ENCODE measurements at regions of chr4 and their contacts with region 1.

Region 1: GRCh38 chr4:73258686-73259570 is at the start of gene ANKRD17:
- DNase-seq: peak; percentile 97 to 98 (median 98)
- H3K4me3 ChIP-seq: peak within 1 kb of the TSS; percentile 92 to 100 (median 95)
- H3K27ac ChIP-seq: peak within 1 kb of the TSS; percentile 91 to 96
- H3K4me1 ChIP-seq: peaks cover 13 to 31% (median 23%) of the 10 kb centered on the region in 4 experiments
- H3K27me3 ChIP-seq: no peaks in the 10 kb centered on the region

Region 2: DNA sequence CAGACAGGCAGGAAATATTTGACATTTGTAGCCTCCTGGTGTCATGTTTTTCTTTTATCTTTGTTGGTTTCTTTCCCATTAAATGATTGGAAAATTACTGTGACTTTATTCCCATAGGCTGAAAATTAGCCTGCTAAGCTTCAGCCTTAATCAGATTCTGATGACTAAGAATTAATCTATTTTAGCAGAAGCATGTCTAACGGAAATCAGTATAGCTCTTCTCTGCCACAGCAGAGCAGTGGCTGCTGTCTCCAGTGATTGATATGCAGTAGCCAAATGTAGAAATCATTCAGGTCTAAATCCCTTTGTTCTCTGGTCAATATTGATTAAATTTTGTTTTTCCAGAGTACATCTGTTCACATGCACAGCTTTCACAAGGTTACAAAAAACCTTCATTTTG is 1674.3 kb before region 1 on chr4:
- CTCF ChIA-PET with region 1: no interaction called
- POLR2A ChIA-PET with region 1: no interaction called
- DNase-seq: no peak
- H3K4me3 ChIP-seq: no peak overlapping the region
- H3K27ac ChIP-seq: no peak overlapping the region
- H3K4me1 ChIP-seq: peaks cover 0 to 3% (median 0%) of the 10 kb centered on the region in 4 experiments
- H3K27me3 ChIP-seq: no peaks in the 10 kb centered on the region

Region 3: GRCh38 chr4:72767618-72768302 is 491.2 kb before region 1 on chr4:
- CTCF ChIA-PET with region 1: no interaction called
- POLR2A ChIA-PET with region 1: no interaction called
- DNase-seq: no peak
- H3K4me3 ChIP-seq: no peak overlapping the region
- H3K27ac ChIP-seq: no peak overlapping the region
- H3K4me1 ChIP-seq: no peaks in the 10 kb centered on the region
- H3K27me3 ChIP-seq: no peaks in the 10 kb centered on the region

Region 4: DNA sequence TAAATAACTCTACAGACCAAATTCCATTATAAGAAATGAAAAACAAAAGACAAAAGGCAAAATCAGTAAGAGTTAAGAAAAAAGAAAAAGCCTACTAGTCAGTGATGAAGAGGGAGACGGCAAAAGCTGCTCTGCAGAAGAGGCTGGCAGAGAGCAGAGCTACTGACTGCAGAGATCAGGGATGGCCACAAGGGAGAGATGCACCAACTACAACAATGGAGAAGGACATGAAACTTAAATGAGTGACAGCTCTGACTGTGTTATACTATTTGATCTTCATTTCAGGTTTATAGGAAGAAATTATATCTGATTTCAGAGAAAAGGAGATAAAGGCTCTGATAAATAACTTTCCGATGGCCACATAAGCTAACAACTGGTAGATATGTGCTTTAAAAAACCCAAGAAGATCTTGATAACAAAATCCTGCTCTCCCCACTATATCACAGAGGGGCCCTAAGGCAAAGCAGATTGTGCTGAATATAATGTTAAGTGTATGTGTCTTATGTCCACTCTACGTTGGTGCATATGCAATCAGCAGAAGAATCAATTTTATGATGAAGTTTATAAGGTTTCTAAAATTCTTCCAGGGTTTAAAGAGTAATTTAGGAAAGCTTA is 131.0 kb before region 1 on chr4:
- CTCF ChIA-PET with region 1: interaction called, 34 read pairs
- POLR2A ChIA-PET with region 1: no interaction called
- DNase-seq: peak; percentile 27 to 57 (median 54)
- H3K4me3 ChIP-seq: no peak overlapping the region
- H3K27ac ChIP-seq: no peak overlapping the region
- H3K4me1 ChIP-seq: no peaks in the 10 kb centered on the region
- H3K27me3 ChIP-seq: no peaks in the 10 kb centered on the region

Region 5: DNA sequence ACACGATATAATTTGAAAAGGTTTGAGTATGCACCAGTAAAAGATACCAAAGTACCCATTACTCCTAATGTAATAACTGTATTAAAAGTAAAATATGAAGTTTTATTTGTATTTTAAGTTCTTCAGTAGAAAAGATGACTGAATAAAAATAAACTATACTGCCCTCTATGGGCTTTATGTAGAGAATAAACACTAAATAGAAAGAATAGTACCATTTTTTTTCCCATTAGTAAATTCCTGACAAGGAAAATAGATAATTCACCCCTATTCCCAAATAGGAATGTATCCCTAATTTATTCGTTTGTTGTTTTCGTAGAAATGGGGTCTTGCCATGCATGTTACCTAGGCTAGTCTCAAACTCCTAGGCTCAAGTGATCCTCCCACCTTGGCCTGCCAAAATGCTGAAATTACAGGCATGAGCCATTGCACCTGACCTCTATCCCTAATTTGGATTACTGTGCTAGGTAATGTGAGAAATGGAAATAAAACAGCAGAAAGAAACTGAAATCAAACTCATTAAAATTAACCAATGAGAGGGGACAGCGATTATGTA is 115.9 kb before region 1 on chr4:
- CTCF ChIA-PET with region 1: interaction called, 18 read pairs
- POLR2A ChIA-PET with region 1: interaction called, 3 read pairs
- DNase-seq: peak in 1 of 3 donors; percentile 1
- H3K4me3 ChIP-seq: no peak overlapping the region
- H3K27ac ChIP-seq: no peak overlapping the region
- H3K4me1 ChIP-seq: no peaks in the 10 kb centered on the region
- H3K27me3 ChIP-seq: no peaks in the 10 kb centered on the region

Region 6: GRCh38 chr4:73244945-73245601 is 13.9 kb before region 1 on chr4:
- CTCF ChIA-PET with region 1: interaction called, 11 read pairs
- POLR2A ChIA-PET with region 1: no interaction called
- DNase-seq: no peak
- H3K4me3 ChIP-seq: no peak overlapping the region
- H3K27ac ChIP-seq: no peak overlapping the region
- H3K4me1 ChIP-seq: peaks cover 0 to 6% (median 3%) of the 10 kb centered on the region in 4 experiments
- H3K27me3 ChIP-seq: no peaks in the 10 kb centered on the region

Region 7: GRCh38 chr4:73308286-73308685 is 49.4 kb after region 1 on chr4:
- CTCF ChIA-PET with region 1: interaction called, 12 read pairs
- POLR2A ChIA-PET with region 1: no interaction called
- DNase-seq: peak; percentile 39 to 72 (median 72)
- H3K4me3 ChIP-seq: no peak overlapping the region
- H3K27ac ChIP-seq: peak overlapping the region in 1 of 2 experiments; percentile 36
- H3K4me1 ChIP-seq: peaks cover 0 to 6% (median 2%) of the 10 kb centered on the region in 4 experiments
- H3K27me3 ChIP-seq: no peaks in the 10 kb centered on the region